ENCODE measurements at regions of chr17 and their contacts with region 1.

Region 1: DNA sequence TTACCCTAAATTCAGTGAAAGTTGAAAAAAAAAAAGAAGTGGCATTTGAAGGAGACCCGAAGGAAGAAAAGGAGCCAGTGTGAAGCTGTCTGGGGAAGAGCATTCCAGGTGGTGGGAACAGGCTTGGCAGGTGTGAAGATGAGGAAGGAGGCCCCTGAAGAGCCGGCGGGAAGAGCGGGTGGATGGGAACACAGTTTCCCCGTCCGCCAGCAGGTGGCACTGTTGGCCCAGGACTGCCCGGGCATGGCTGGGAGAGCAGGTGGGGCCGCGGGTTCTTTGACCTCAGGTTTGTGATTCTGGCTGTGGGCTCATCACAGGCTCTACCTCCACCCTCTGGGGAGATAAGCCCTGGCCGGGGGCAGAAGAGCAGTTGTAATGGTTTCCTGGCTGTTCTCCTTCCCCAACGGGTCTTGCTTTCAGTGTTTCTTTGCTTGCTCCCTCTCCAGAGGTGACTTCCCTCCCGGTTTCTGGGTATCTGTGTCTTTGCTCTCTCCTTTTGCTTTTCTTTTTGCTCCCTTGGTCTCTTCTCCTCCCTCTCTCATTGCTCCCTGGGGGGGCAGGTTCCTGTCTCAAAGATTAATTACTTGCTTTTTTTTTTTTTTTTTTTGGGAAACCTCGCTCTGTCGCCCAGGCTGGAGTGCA is 32.3 kb downstream of the RAP1GAP2 start:
- DNase-seq: peak; percentile 82 to 91
- ATAC-seq: peak; percentile 95 to 97
- H3K4me3 ChIP-seq: no peak overlapping the region
- H3K27ac ChIP-seq: peak overlapping the region; percentile 60 to 70
- H3K4me1 ChIP-seq: peaks cover 7% of the 10 kb centered on the region
- CTCF ChIP-seq: peak; percentile 98
- EP300 ChIP-seq: no peak
- POLR2A ChIP-seq: no peak
- RAD21 ChIP-seq: peak; percentile 99

Region 2: DNA sequence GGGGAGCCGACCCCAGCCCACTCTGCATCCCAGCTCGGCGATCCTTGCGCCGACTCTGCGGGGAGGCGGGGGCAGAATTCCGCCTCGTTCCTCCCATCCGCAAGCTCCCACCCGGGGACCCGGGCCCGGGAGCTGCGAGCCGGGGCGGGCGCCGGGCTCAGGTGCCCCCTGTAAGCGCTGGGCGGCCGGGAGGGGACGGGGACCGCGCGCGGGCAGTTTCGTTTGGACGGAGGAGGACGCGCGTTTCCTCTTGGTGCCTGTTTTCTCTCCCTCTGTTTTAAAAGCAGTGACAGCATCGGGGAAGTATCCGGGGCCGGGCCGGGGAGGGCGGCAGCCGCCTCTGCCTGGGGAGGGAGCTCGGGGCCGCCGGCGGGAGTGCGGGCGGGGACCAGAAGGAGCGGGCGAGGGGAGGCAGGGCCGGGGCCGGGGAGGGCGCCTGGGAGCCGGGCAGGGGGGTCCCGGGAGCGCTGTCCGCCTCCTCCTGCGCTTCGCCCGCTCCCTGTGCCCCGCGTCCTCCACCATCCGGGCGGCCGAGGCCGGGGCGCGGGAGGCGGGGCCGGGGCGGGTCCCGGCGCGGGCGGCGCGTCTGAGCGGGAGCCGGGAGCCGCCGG is 24.7 kb after region 1 on chr17:
- CTCF ChIA-PET with region 1: interaction called, 267 read pairs
- POLR2A ChIA-PET with region 1: no interaction called
- DNase-seq: peak; percentile 63 to 73
- ATAC-seq: peak; percentile 57 to 72
- H3K4me3 ChIP-seq: peak overlapping the region; percentile 72
- H3K27ac ChIP-seq: peak overlapping the region; percentile 87 to 92
- H3K4me1 ChIP-seq: peaks cover 23% of the 10 kb centered on the region
- CTCF ChIP-seq: no peak
- EP300 ChIP-seq: no peak
- POLR2A ChIP-seq: no peak
- RAD21 ChIP-seq: 0 out of 5 replicates have a peak, but pooled peaks of 1 of the 2 experiments have one; percentile 15

Region 3: DNA sequence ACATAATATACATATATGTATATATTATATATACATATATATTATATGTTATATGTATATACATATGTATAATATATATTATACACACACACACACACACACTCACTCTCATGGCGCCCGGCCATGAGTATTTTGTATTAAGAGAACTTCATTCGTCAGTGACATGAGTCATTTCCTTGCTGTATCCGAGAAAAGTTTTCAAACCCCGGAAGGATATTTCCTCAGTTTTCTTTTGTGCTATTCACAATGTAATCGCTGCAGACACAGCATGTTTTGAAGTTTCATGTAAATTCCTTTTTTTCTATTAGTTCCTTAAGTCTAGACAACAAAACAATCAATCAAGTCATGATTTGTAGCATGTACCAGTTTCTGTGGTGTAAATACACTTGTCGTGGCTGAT is 201.6 kb after region 1 on chr17:
- CTCF ChIA-PET with region 1: interaction called, 12 read pairs
- POLR2A ChIA-PET with region 1: no interaction called
- DNase-seq: no peak
- ATAC-seq: no peak
- H3K4me3 ChIP-seq: no peak overlapping the region
- H3K27ac ChIP-seq: no peak overlapping the region
- H3K4me1 ChIP-seq: no peaks in the 10 kb centered on the region
- CTCF ChIP-seq: no peak
- EP300 ChIP-seq: no peak
- POLR2A ChIP-seq: no peak
- RAD21 ChIP-seq: no peak

Measured in A549 (cell line).